ENCODE measurements at regions of chr14 and their contacts with region 1.

Region 1: DNA sequence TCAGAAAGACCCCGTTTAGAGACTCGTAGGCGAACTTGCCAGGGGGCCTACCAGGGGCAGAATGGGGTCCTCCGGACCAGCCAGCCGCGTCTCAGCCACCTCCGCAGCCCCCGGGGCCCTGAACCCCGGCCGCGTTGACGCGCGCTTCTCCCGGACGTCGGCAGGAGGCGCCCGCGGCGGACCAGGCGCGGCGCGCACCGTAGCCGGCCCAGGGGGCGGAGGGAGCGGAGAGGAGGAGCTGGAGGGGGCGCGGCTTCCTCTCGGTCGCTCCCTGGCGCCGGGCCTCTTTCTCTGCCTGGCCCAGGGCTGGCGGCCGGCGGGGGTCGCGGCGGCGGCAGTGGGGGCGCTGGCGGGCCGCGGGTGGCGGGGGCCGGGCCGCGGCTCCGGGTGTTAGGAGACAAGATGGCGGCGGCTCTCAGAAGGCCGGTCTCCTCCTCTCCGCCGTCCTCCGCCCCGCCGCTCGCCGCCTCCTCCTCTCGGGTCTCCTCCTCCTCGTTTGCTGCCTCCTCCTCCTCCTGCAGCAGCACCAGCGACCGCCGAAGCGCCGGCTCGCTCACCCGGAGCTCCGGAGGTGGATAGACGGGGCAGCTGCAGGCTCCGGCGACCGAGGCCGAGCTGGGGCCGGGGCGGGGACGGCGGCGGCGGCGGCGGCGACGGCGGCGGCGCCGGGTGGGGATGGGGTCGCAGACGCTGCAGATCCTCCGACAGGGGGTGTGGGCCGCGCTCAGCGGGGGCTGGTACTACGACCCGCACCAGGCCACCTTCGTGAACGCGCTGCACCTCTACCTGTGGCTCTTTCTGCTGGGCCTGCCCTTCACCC is at the start of gene PCNX1:
- DNase-seq: peak; percentile 83
- H3K4me3 ChIP-seq: peak within 1 kb of the TSS; percentile 90 to 98 (median 91)
- H3K27ac ChIP-seq: peak within 1 kb of the TSS; percentile 92
- H3K4me1 ChIP-seq: peaks cover 27% of the 10 kb centered on the region
- H3K27me3 ChIP-seq: no peaks in the 10 kb centered on the region
- CTCF ChIP-seq: peak; percentile 46 to 73
- total RNA-seq, gene PCNX1: 67.9 to 112 TPM

Region 2: DNA sequence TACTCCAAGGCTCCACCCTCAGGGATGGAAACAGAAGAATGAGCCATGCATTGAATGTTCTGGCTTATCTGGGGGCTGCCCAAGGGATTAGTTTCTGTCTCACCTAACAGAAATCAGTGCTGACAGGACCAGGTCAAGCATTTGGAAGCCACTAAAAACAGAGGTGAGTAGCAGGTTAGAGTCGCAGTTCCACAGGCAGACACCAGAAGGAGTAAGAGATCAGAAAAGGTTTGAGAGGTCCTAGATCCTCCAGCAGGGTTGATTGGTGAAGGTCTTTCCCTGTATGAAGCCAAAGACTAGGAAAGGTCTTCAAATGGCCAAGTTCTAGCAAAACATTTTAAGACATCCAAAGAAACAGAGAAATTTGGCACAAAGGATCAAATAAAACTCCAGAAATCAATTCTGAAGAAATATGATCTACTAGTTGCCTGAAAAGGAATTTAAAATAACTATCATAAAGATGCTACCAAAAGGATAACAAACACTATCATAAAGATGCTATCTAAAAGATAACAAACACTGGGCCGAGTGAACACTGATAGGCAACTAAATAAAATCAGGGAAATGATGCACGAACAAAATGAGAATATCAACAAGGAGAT is 285.2 kb before region 1 on chr14:
- CTCF ChIA-PET with region 1: no interaction called
- dilution Hi-C with region 1: no loop called
- in situ Hi-C with region 1: no loop called
- intact Hi-C with region 1: loop called (anchors 5 kb)
- DNase-seq: peak; percentile 52
- H3K4me3 ChIP-seq: no peak overlapping the region
- H3K27ac ChIP-seq: no peak overlapping the region
- H3K4me1 ChIP-seq: peaks cover 7% of the 10 kb centered on the region
- H3K27me3 ChIP-seq: no peaks in the 10 kb centered on the region
- CTCF ChIP-seq: peak; percentile 92 to 95

Region 3: GRCh38 chr14:70821584-70822529 is 85.5 kb before region 1 on chr14:
- CTCF ChIA-PET with region 1: interaction called, 6 read pairs
- dilution Hi-C with region 1: no loop called
- in situ Hi-C with region 1: loop called in 1 of 2 experiments (anchors 10 kb)
- intact Hi-C with region 1: loop called (anchors 1 kb)
- DNase-seq: peak; percentile 62
- H3K4me3 ChIP-seq: peak overlapping the region; percentile 69 to 76 (median 69)
- H3K27ac ChIP-seq: no peak overlapping the region
- H3K4me1 ChIP-seq: peaks cover 19% of the 10 kb centered on the region
- H3K27me3 ChIP-seq: no peaks in the 10 kb centered on the region
- CTCF ChIP-seq: no peak

Region 4: DNA sequence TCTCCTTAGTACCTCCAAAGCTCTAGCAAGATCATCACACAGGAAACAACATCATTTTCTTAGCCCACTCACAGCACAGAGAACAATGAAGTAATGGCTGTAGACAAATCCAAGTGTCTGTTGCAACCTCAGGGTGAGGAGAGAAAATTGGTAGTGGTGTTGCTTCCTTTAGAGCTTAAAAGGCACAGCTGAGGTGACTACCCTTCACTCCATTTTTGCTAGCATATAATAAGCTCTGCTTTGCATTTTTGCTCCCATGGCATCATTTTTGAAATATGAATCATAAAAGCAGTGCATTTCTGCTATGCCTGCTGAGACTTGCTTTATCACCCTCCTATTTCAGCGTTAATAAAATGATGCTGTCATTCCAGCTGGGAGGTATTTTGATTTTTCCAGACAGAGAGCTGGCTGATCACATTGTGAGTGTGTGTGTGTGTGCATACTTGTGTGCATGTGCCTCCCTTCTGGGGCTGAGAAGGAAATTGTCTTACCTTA is 18.7 kb before region 1 on chr14:
- CTCF ChIA-PET with region 1: interaction called, 6 read pairs
- dilution Hi-C with region 1: no loop called
- in situ Hi-C with region 1: no loop called
- intact Hi-C with region 1: loop called (anchors 1 kb)
- DNase-seq: peak; percentile 89
- H3K4me3 ChIP-seq: no peak overlapping the region
- H3K27ac ChIP-seq: peak overlapping the region; percentile 38
- H3K4me1 ChIP-seq: peaks cover 43% of the 10 kb centered on the region
- H3K27me3 ChIP-seq: no peaks in the 10 kb centered on the region
- CTCF ChIP-seq: no peak

Region 5: GRCh38 chr14:70919774-70920173 is 12.4 kb after region 1 on chr14:
- CTCF ChIA-PET with region 1: no interaction called
- dilution Hi-C with region 1: no loop called
- in situ Hi-C with region 1: no loop called
- intact Hi-C with region 1: loop called (anchors 1 kb)
- DNase-seq: no peak
- H3K4me3 ChIP-seq: peak overlapping the region in 1 of 3 experiments; percentile 13
- H3K27ac ChIP-seq: peak overlapping the region; percentile 7
- H3K4me1 ChIP-seq: peaks cover 24% of the 10 kb centered on the region
- H3K27me3 ChIP-seq: no peaks in the 10 kb centered on the region
- CTCF ChIP-seq: no peak

Region 6: DNA sequence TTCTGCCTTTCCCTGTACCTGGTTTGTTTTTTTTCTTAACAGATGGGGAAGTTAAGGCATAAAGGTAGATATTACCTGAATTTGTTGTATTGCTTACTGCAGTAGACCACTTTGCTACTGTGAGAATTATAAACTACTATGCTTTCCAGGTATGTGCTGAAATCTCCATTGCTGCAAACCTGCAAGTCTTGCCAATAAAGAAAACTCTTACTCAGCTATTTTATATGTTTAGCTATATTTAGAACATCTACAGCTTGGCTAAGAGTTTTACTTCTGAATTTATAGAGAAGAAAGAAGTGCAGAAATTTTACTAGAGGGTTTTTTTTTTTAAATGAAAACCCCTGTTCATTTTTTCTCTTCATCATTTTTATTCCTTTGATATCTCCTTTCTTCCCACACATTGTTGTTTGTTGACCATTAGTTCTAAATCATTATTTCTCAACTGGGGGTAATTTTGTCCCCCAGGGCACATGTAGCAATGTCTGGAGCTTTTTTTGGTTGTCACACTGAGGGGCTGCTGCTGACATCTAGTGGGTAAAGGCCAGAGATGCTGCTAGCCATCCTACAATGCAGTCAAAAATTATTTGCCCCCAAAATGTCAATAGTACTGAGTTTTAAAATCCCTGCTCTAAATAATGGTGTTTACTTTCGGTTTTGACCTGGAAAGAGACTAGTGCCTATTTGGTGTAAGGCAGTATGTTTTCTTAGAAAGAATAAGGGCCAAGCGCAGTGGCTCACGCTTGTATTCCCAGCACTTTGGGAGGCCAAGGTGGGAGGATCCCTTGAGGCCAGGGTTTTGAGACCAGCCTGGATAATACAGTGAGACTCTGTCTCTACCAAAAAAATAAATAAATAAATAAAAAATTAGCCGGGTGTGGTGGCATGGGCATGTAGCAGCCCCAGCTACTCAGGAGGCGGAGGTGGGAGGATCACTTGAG is 48.4 kb after region 1 on chr14:
- CTCF ChIA-PET with region 1: interaction called, 5 read pairs
- dilution Hi-C with region 1: no loop called
- in situ Hi-C with region 1: no loop called
- intact Hi-C with region 1: loop called (anchors 1 kb)
- DNase-seq: no peak
- H3K4me3 ChIP-seq: no peak overlapping the region
- H3K27ac ChIP-seq: no peak overlapping the region
- H3K4me1 ChIP-seq: no peaks in the 10 kb centered on the region
- H3K27me3 ChIP-seq: no peaks in the 10 kb centered on the region
- CTCF ChIP-seq: peak; percentile 57 to 66

Region 7: GRCh38 chr14:70972107-70972976 is 65.0 kb after region 1 on chr14:
- CTCF ChIA-PET with region 1: interaction called, 3 read pairs
- dilution Hi-C with region 1: no loop called
- in situ Hi-C with region 1: no loop called
- intact Hi-C with region 1: loop called (anchors 1 kb)
- DNase-seq: peak; percentile 70
- H3K4me3 ChIP-seq: no peak overlapping the region
- H3K27ac ChIP-seq: no peak overlapping the region
- H3K4me1 ChIP-seq: no peaks in the 10 kb centered on the region
- H3K27me3 ChIP-seq: no peaks in the 10 kb centered on the region
- CTCF ChIP-seq: peak; percentile 85 to 92